ENCODE measurements at regions of chr3 and their contacts with region 1.

Region 1: GRCh38 chr3:186259612-186260383 is 102.2 kb downstream of the DGKG start:
- DNase-seq: peak in 1 of 2 donors; percentile 74
- H3K4me3 ChIP-seq: no peak overlapping the region
- H3K27ac ChIP-seq: no peak overlapping the region
- H3K4me1 ChIP-seq: peaks cover 0 to 2% of the 10 kb centered on the region in 2 donors
- H3K27me3 ChIP-seq: no peaks in the 10 kb centered on the region
- CTCF ChIP-seq: peak; percentile 80 to 91 (median 90)

Region 2: GRCh38 chr3:186540221-186540834 is 280.5 kb after region 1 on chr3:
- intact Hi-C with region 1: loop called (anchors 1 kb)
- DNase-seq: peak in 1 of 2 donors; percentile 86
- H3K4me3 ChIP-seq: peak overlapping the region; percentile 22 to 37
- H3K27ac ChIP-seq: no peak overlapping the region
- H3K4me1 ChIP-seq: no peaks in the 10 kb centered on the region
- H3K27me3 ChIP-seq: no peaks in the 10 kb centered on the region
- CTCF ChIP-seq: peak; percentile 60 to 76 (median 70)